ENCODE measurements at regions of chr12 and their contacts with region 1.

Region 1: DNA sequence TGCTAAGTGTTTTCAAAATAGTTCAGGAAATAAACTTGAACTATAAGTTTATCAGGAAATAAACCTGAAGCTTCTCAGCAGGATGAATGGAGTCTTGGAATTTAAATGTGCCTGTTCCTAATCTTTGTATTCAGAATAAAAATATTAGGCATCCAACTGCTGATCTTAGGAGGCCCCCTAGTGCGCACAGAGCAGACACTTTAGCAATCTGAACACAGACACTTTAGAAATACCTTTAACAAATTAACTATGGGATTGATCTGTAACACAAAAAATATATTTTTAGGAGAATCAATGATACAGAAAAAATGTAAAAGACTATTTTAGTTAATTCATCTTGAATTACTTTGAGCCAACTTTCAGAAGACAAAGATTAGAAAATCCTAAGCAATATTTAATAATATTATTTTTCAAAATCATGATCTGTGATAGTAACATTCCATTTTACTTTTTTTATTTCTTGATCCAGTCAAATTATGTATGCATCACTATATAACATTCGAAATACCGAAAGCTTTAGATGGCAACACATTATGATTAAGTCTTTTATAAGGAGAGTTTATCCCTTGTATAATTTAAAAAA is 80.9 kb downstream of the SLC41A2 start:
- DNase-seq: peak; percentile 19
- H3K4me3 ChIP-seq: no peak overlapping the region
- H3K27ac ChIP-seq: no peak overlapping the region
- H3K4me1 ChIP-seq: no peaks in the 10 kb centered on the region
- H3K27me3 ChIP-seq: no peaks in the 10 kb centered on the region
- CTCF ChIP-seq: peak; percentile 56 to 74

Region 2: GRCh38 chr12:104303538-104304151 is 573.6 kb before region 1 on chr12 and contains the start of gene EID3:
- CTCF ChIA-PET with region 1: no interaction called
- dilution Hi-C with region 1: no loop called
- in situ Hi-C with region 1: no loop called
- intact Hi-C with region 1: no loop called
- DNase-seq: peak; percentile 71
- H3K4me3 ChIP-seq: peak within 1 kb of the TSS; percentile 32 to 55 (median 46)
- H3K27ac ChIP-seq: peak within 1 kb of the TSS; percentile 61
- H3K4me1 ChIP-seq: peaks cover 20% of the 10 kb centered on the region
- H3K27me3 ChIP-seq: no peaks in the 10 kb centered on the region
- CTCF ChIP-seq: no peak
- total RNA-seq, gene EID3: 5.3 to 6.3 TPM

Region 3: GRCh38 chr12:104671407-104672098 is 205.7 kb before region 1 on chr12:
- CTCF ChIA-PET with region 1: no interaction called
- dilution Hi-C with region 1: no loop called
- in situ Hi-C with region 1: no loop called
- intact Hi-C with region 1: loop called (anchors 10 kb)
- DNase-seq: peak; percentile 96
- H3K4me3 ChIP-seq: no peak overlapping the region
- H3K27ac ChIP-seq: peak overlapping the region; percentile 55
- H3K4me1 ChIP-seq: peaks cover 52% of the 10 kb centered on the region
- H3K27me3 ChIP-seq: no peaks in the 10 kb centered on the region
- CTCF ChIP-seq: no peak

Region 4: DNA sequence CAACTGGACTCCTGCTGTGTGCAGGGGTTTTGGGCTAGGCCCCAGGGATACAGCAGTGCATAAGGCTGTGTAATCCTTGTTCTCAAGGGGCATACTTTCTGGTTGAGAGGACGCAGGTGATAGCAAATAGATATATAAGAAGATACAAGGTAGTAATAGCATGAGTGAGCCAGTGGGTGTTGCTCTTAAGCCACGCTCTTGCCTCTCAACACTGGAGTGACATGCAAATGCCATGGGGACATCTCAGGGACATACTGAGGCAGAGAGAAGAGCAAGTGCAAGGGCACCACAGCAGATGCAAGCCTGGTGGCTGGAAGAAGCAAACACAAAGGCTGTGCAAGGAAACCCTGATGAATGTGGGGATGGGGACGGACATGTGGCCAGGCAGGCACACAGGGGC is 197.1 kb before region 1 on chr12:
- CTCF ChIA-PET with region 1: no interaction called
- dilution Hi-C with region 1: no loop called
- in situ Hi-C with region 1: no loop called
- intact Hi-C with region 1: loop called (anchors 1 kb)
- DNase-seq: no peak
- H3K4me3 ChIP-seq: no peak overlapping the region
- H3K27ac ChIP-seq: no peak overlapping the region
- H3K4me1 ChIP-seq: peaks cover 13% of the 10 kb centered on the region
- H3K27me3 ChIP-seq: no peaks in the 10 kb centered on the region
- CTCF ChIP-seq: peak in 1 of 2 donors; percentile 31

Region 5: GRCh38 chr12:104733717-104734175 is 143.5 kb before region 1 on chr12:
- CTCF ChIA-PET with region 1: no interaction called
- dilution Hi-C with region 1: no loop called
- in situ Hi-C with region 1: no loop called
- intact Hi-C with region 1: loop called (anchors 5 kb)
- DNase-seq: no peak
- H3K4me3 ChIP-seq: no peak overlapping the region
- H3K27ac ChIP-seq: no peak overlapping the region
- H3K4me1 ChIP-seq: peaks cover 8% of the 10 kb centered on the region
- H3K27me3 ChIP-seq: no peaks in the 10 kb centered on the region
- CTCF ChIP-seq: peak in 1 of 2 donors; percentile 38

Region 6: DNA sequence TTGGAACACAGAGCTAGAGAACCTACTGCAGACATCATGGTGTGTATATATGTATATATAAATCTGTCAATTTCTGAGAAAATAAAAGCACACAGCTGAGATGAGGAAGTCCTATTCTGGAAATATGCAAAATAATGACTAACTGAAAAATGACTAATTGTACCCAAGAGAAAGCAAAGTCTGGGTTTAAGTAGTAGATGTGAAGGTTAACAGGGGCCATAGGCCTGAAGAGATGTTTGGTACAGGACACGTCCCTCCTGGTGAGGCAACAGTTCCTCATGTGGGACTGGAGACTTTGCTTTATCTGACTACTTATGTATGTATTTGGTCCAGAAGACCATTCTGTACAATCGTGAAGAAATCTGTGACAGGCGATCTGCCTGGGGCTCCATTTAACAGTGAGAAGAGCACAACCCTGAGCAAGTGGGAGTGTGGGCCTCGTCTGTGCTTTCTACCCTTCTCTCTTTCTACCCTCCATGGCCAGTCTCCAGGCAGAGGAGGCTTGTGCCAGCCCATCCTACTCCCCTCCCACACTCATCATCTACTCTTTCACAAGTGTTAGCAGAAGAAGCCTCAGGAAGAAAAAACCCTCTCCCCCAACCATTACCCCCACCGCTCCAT is 13.4 kb after region 1 on chr12:
- CTCF ChIA-PET with region 1: no interaction called
- dilution Hi-C with region 1: no loop called
- in situ Hi-C with region 1: no loop called
- intact Hi-C with region 1: no loop called
- DNase-seq: no peak
- H3K4me3 ChIP-seq: no peak overlapping the region
- H3K27ac ChIP-seq: no peak overlapping the region
- H3K4me1 ChIP-seq: no peaks in the 10 kb centered on the region
- H3K27me3 ChIP-seq: no peaks in the 10 kb centered on the region
- CTCF ChIP-seq: no peak

Region 7: GRCh38 chr12:105053116-105053572 is 175.9 kb after region 1 on chr12:
- CTCF ChIA-PET with region 1: no interaction called
- dilution Hi-C with region 1: no loop called
- in situ Hi-C with region 1: no loop called
- intact Hi-C with region 1: loop called (anchors 2 kb)
- DNase-seq: peak; percentile 61
- H3K4me3 ChIP-seq: no peak overlapping the region
- H3K27ac ChIP-seq: no peak overlapping the region
- H3K4me1 ChIP-seq: no peaks in the 10 kb centered on the region
- H3K27me3 ChIP-seq: no peaks in the 10 kb centered on the region
- CTCF ChIP-seq: peak; percentile 88 to 97

Measured in mammary epithelial cell (primary cell).